Activated CD4-positive, alpha-beta T cell treated with anti-CD3 and anti-CD28 coated beads for 36 hours (primary cell): ENCODE measurements at regions of chrX and their contacts with region 1.

Region 1: GRCh38 chrX:123732670-123733363 is at the start of gene THOC2:
- DNase-seq: peak; percentile 85
- ATAC-seq: peak; percentile 86
- H3K4me3 Mint-ChIP-seq: peak within 1 kb of the TSS; percentile 90
- H3K27ac Mint-ChIP-seq: peak within 1 kb of the TSS; percentile 92
- H3K4me1 Mint-ChIP-seq: peaks cover 31% of the 10 kb centered on the region
- H3K27me3 Mint-ChIP-seq: no peaks in the 10 kb centered on the region
- total RNA-seq, gene THOC2: 80.7 to 85.4 TPM

Region 2: GRCh38 chrX:123450221-123450620 is 282.6 kb before region 1 on chrX:
- CTCF ChIA-PET with region 1: no interaction called
- POLR2A ChIA-PET with region 1: no interaction called
- intact Hi-C with region 1: no loop called
- DNase-seq: peak; percentile 3
- ATAC-seq: no peak
- H3K4me3 Mint-ChIP-seq: no peak overlapping the region
- H3K27ac Mint-ChIP-seq: no peak overlapping the region
- H3K4me1 Mint-ChIP-seq: no peaks in the 10 kb centered on the region
- H3K27me3 Mint-ChIP-seq: peaks cover 1% of the 10 kb centered on the region

Region 3: DNA sequence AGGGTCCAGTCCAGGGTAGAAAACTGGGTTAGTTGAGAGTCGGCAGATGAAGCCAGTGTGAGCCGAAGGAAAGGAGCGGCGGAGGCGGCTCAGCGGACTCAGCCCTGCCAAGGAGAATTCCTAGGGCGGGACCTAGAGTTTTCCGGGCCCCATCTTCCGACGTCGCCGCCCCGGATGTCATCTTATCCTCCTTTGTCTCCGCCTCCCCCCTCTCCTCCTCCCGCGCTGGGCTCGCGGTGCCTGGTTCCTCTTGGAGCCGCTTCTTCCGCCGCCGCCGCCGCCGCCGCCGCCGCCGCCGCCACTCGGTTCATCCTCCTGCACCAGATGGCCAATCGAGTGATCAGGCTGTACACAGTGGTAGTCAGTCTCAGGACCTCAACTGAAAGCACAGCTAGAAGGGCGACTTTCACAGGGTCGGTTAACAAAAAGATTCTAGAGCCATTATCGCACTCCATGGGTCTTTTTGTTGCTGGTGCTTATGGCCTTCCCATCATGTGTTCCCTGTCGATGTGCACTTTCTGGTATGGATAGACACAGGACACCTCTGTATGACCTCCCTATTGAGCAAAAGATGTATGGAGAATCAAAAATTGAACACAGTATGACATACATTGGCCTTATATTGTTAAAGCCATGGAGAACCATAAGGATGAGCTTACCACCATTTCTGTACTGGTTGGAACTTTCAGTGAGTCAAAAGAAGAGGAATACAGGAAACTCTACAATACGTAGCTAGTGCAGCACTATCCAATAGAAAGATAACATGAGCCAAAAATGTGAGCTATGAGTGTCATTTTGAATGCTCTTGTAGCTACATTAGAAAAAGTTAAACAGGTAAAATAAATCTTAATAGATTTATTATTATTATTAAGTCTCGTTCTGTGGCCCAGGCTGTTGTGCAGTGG is 32.4 kb after region 1 on chrX:
- CTCF ChIA-PET with region 1: no interaction called
- POLR2A ChIA-PET with region 1: no interaction called
- intact Hi-C with region 1: loop called in 1 of 2 experiments (anchors 1 kb)
- DNase-seq: peak; percentile 81
- ATAC-seq: peak; percentile 91
- H3K4me3 Mint-ChIP-seq: peak overlapping the region; percentile 68
- H3K27ac Mint-ChIP-seq: peak overlapping the region; percentile 80
- H3K4me1 Mint-ChIP-seq: peaks cover 5% of the 10 kb centered on the region
- H3K27me3 Mint-ChIP-seq: no peaks in the 10 kb centered on the region